CD8-positive, alpha-beta memory T cell (primary cell): ENCODE measurements at regions of chr7 and their contacts with region 1.

Region 1: GRCh38 chr7:100611974-100612729 is at the start of gene MOSPD3:
- DNase-seq: peak; percentile 96 to 98 (median 98)
- H3K4me3 ChIP-seq: peak within 1 kb of the TSS; percentile 99
- H3K4me3 Mint-ChIP-seq: peak within 1 kb of the TSS; percentile 91 to 100 (median 99)
- H3K27ac ChIP-seq: peak within 1 kb of the TSS; percentile 99
- H3K27ac Mint-ChIP-seq: peak within 1 kb of the TSS; percentile 94 to 100 (median 100)
- H3K4me1 ChIP-seq: peaks cover 19% of the 10 kb centered on the region
- H3K4me1 Mint-ChIP-seq: peaks cover 20 to 24% (median 23%) of the 10 kb centered on the region in 3 donors
- H3K27me3 ChIP-seq: no peaks in the 10 kb centered on the region
- H3K27me3 Mint-ChIP-seq: no peaks in the 10 kb centered on the region
- total RNA-seq, gene MOSPD3: 16.2 to 16.3 TPM

Region 2: GRCh38 chr7:100428967-100429636 is 183.1 kb before region 1 on chr7:
- CTCF ChIA-PET with region 1: no interaction called
- POLR2A ChIA-PET with region 1: interaction called, 14 read pairs
- DNase-seq: peak; percentile 100
- H3K4me3 ChIP-seq: peak overlapping the region; percentile 96
- H3K4me3 Mint-ChIP-seq: peak overlapping the region; percentile 96 to 100 (median 98)
- H3K27ac ChIP-seq: peak overlapping the region; percentile 100
- H3K27ac Mint-ChIP-seq: peak overlapping the region; percentile 94 to 100 (median 100)
- H3K4me1 ChIP-seq: peaks cover 34% of the 10 kb centered on the region
- H3K4me1 Mint-ChIP-seq: peaks cover 31 to 56% (median 35%) of the 10 kb centered on the region in 3 donors
- H3K27me3 ChIP-seq: no peaks in the 10 kb centered on the region
- H3K27me3 Mint-ChIP-seq: peaks cover 0 to 13% of the 10 kb centered on the region in 2 donors

Region 3: GRCh38 chr7:100435401-100436304 is 176.5 kb before region 1 on chr7:
- CTCF ChIA-PET with region 1: no interaction called
- POLR2A ChIA-PET with region 1: interaction called, 14 read pairs
- DNase-seq: peak; percentile 33 to 68 (median 46)
- H3K4me3 ChIP-seq: peak overlapping the region; percentile 65
- H3K4me3 Mint-ChIP-seq: peak overlapping the region; percentile 89 to 99 (median 95)
- H3K27ac ChIP-seq: peak overlapping the region; percentile 89
- H3K27ac Mint-ChIP-seq: peak overlapping the region; percentile 85 to 98 (median 96)
- H3K4me1 ChIP-seq: peaks cover 37% of the 10 kb centered on the region
- H3K4me1 Mint-ChIP-seq: peaks cover 36 to 54% (median 38%) of the 10 kb centered on the region in 3 donors
- H3K27me3 ChIP-seq: no peaks in the 10 kb centered on the region
- H3K27me3 Mint-ChIP-seq: no peaks in the 10 kb centered on the region

Region 4: DNA sequence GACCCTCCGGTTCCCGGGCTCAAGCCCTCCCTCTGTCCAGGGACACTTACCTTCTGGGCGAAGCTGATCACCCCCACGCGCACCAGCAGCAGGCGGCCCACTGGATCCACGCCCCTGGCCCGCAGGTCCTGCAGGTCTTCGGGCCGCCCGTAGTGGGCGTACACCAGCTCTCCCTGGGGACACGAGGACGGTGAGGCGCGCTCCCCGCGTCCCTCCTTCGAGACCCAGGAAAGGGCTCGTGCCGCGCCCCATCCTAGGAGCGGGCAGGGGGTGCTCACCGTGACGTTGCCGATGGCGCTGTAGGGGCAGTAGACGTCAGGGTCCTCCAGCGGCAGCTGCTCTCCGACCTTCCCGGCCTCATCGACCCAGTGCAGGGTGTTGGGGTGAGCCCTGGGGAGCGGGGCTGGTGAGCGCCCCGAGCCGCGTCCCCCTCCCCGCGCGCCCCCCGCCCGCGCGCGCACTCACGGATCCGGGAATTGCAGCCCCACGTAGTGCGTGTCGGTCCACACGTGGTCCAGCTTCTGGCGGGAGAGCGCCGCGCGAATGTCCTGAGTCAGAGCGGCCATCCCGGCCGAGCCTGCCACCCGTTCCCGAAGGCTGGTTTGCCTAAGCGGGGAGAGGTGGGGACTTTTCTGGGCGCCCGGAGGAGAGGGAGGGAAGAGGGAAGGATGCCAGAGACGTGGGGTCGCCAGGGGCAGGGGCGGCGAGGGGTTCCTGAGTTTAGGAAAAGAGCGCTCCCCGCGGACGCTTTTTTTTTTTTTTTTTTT is 21.0 kb after region 1 on chr7:
- CTCF ChIA-PET with region 1: interaction called, 12 read pairs
- POLR2A ChIA-PET with region 1: interaction called, 8 read pairs
- DNase-seq: peak; percentile 34 to 75 (median 50)
- H3K4me3 ChIP-seq: peak overlapping the region; percentile 66
- H3K4me3 Mint-ChIP-seq: peak overlapping the region; percentile 83 to 94 (median 85)
- H3K27ac ChIP-seq: no peak overlapping the region
- H3K27ac Mint-ChIP-seq: peak overlapping the region; percentile 41 to 90 (median 82)
- H3K4me1 ChIP-seq: peaks cover 6% of the 10 kb centered on the region
- H3K4me1 Mint-ChIP-seq: peaks cover 14 to 29% (median 25%) of the 10 kb centered on the region in 3 donors
- H3K27me3 ChIP-seq: no peaks in the 10 kb centered on the region
- H3K27me3 Mint-ChIP-seq: peaks cover 2 to 3% of the 10 kb centered on the region in 2 donors

Region 5: DNA sequence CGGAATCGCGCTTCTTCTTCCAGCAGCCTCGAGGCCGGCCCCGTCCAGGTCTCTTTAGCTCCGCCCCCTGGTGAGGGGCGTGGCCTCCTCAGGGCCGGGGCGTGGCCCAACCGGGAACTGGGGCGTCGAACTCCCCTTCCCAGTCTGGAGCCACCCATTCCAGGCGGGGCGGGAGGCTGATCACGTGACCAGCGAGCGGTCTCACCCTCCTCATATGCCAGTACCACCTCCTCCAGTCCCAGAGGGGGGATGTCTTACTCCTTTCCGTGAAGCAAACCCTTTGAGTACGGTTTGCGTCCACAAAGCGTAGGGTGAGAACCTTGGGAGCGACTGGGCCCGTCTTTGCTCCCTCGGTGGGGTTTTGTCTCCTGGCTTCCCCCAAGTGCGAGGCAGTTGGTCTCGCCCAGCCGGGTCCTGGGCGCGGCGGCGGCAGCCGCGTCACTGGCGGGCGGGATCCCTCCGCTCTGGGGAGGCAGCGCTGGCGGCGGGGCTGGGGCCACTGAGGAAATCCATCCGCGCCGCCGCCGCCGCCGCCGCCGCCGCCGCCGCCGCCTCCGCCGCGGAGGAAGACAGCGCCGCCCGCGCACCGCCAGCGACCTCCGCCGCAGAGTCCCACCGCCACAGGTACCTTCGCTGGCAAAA is 61.3 kb after region 1 on chr7 and contains the start of gene GNB2:
- CTCF ChIA-PET with region 1: no interaction called
- POLR2A ChIA-PET with region 1: interaction called, 14 read pairs
- DNase-seq: peak; percentile 93 to 98 (median 96)
- H3K4me3 ChIP-seq: peak within 1 kb of the TSS; percentile 84
- H3K4me3 Mint-ChIP-seq: peak within 1 kb of the TSS; percentile 92 to 98 (median 95)
- H3K27ac ChIP-seq: peak within 1 kb of the TSS; percentile 89
- H3K27ac Mint-ChIP-seq: peak within 1 kb of the TSS; percentile 95 to 98 (median 96)
- H3K4me1 ChIP-seq: peaks cover 15% of the 10 kb centered on the region
- H3K4me1 Mint-ChIP-seq: peaks cover 10 to 23% (median 12%) of the 10 kb centered on the region in 3 donors
- H3K27me3 ChIP-seq: no peaks in the 10 kb centered on the region
- H3K27me3 Mint-ChIP-seq: peaks cover 0 to 6% of the 10 kb centered on the region in 2 donors
- total RNA-seq, gene GNB2: 253 to 262 TPM